Aorta (tissue), 5 donors: ENCODE measurements at regions of chr2 and their contacts with region 1.

Region 1: GRCh38 chr2:39227628-39228412 is 15.9 kb downstream of the CDKL4 start:
- DNase-seq: peak; percentile 85 to 93
- ATAC-seq: peak; percentile 91
- H3K4me3 ChIP-seq: no peak overlapping the region
- H3K27ac ChIP-seq: no peak overlapping the region
- H3K4me1 ChIP-seq: no peaks in the 10 kb centered on the region
- H3K27me3 ChIP-seq: no peaks in the 10 kb centered on the region

Region 2: GRCh38 chr2:38947240-38948239 is 280.3 kb before region 1 on chr2:
- intact Hi-C with region 1: loop called (anchors 2 to 10 kb)
- DNase-seq: peak; percentile 82 to 84
- ATAC-seq: peak; percentile 66
- H3K4me3 ChIP-seq: no peak overlapping the region
- H3K27ac ChIP-seq: no peak overlapping the region
- H3K4me1 ChIP-seq: no peaks in the 10 kb centered on the region
- H3K27me3 ChIP-seq: no peaks in the 10 kb centered on the region

Region 3: DNA sequence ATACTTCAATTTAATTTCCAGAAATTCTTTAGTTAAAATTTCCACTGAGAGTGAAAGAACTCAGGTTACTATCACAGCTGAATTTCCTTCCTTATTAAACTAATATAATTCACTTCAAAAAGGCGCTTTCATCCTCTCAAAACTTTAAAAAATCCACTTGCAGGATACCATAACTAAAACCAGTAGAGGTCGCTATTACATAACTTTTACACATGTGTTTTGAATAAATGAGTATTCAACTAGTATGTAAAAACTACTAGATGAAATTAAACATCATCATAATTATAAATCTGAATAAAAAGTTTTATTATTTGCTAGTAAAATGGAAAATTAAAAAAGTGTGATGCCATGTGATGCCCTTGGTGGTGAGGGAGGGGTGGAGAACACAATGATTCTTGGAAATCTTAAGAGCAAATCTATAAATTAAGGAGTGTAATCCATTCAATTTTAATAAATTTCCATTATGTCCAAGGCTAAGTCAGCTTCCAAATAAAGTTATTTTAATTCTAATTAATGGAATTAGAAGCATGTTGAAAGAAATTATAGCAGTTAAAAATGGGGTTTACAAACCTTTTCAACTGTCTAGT is 168.4 kb before region 1 on chr2:
- intact Hi-C with region 1: loop called (anchors 1 to 2 kb)
- DNase-seq: no peak
- ATAC-seq: no peak
- H3K4me3 ChIP-seq: no peak overlapping the region
- H3K27ac ChIP-seq: no peak overlapping the region
- H3K4me1 ChIP-seq: peaks cover 0 to 2% of the 10 kb centered on the region in 2 donors
- H3K27me3 ChIP-seq: no peaks in the 10 kb centered on the region

Region 4: DNA sequence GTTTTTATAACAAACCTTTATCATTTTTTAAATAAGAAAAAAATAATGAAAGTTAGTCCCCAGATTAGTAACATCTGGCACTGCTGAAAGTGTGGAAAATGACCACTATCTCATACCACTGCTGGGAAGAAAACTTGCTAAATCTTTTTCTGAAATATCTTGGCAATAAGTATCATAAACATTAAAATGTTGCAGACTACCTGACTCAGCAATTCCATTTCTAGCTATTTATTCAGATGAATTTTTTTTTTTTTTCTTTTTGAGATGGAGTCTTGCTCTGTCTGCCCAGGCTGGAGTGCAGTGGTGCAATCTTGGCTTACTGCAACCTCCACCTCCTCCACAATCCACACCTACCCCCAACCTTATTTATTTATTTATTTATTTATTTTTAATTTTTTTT is 71.7 kb before region 1 on chr2:
- intact Hi-C with region 1: loop called in 1 of 2 experiments (anchors 5 kb)
- DNase-seq: no peak
- ATAC-seq: peak; percentile 69
- H3K4me3 ChIP-seq: no peak overlapping the region
- H3K27ac ChIP-seq: no peak overlapping the region
- H3K4me1 ChIP-seq: peaks cover 0 to 2% of the 10 kb centered on the region in 2 donors
- H3K27me3 ChIP-seq: no peaks in the 10 kb centered on the region